ENCODE measurements at regions of chr6 and their contacts with region 1.

Region 1: DNA sequence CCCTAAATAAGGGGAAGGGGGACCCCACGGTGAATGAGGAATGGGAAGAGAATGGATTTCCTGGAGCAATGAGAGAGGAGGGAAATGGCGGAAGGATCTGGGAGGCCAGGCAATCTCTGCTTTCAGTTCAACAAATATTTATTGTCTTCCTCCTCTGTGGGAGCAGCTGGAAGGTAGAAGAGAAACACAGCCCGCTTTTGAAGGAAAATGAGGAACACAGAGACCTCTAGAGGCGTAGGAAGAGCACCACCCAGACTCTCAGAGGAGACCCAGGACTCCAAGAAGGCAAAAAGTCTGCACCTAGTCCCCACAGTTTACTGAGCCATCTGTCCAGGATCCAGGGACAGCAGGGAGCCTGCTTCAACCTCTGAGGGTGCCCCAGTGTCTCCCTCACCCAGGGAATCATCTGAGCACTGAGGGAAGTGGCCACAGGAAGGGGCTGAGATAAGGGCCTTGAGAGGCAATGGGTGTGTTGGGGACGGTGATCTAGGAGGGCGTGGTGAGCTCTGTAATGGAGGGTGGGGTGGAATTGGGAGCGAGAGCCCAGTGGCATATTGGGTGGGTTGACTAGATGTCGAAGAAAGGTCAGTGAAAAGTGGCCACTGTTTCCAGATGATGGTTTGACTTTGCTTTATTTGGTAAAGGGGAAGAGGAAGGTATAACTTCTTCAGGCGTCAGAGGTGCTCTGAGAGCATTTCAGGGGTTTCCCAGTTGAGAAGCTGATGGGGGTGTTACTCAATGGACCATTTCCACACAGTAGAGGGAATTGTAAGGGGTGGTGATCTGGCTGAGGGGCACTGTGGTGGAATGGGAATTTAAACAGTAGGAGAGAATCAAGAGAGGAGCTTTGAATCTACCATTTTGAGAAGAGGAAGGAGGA is 610 bp downstream of the PSORS1C1 start:
- DNase-seq: peak; percentile 35
- H3K4me3 ChIP-seq: peak overlapping the region; percentile 19
- CTCF ChIP-seq: peak; percentile 54

Region 2: GRCh38 chr6:31149827-31150447 is 34.7 kb after region 1 on chr6:
- in situ Hi-C with region 1: loop called (anchors 5 kb)
- DNase-seq: no peak
- H3K4me3 ChIP-seq: no peak overlapping the region
- CTCF ChIP-seq: no peak

Measured in astrocyte of the cerebellum (primary cell).